ENCODE measurements at regions of chr2 and their contacts with region 1.

Region 1: DNA sequence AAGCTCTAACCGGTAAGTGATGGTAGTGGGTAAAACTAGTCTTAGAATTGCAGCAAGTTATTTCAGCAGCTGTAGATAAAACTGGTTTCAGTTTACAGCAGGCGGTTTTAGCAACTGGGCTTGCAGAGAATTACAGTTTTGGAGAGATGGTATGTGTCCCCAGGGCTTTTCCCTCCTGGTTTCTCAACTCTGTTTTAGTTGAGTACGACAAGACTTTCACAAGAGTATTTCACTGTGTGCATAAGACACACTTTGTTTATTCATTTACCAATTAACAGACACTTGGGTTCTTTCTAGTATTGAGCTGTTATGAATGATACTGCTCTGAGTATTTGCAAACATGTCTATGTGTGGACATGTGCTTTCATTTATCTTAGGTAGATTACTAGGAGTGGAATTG is 65.6 kb upstream of the RFX8 start:
- DNase-seq: no peak
- H3K4me3 ChIP-seq: peak overlapping the region in 2 of 59 donors; percentile 5 to 14
- H3K27ac ChIP-seq: peak overlapping the region in 8 of 59 donors; percentile 4 to 36 (median 18)
- H3K27me3 ChIP-seq: no peaks in the 10 kb centered on the region
- CTCF ChIP-seq: no peak

Region 2: GRCh38 chr2:101057051-101057933 is 483.2 kb before region 1 on chr2:
- intact Hi-C with region 1: no loop called
- DNase-seq: no peak
- H3K4me3 ChIP-seq: no peak overlapping the region
- H3K27ac ChIP-seq: no peak overlapping the region
- H3K27me3 ChIP-seq: no peaks in the 10 kb centered on the region
- CTCF ChIP-seq: no peak

Region 3: GRCh38 chr2:101619191-101619591 is 78.7 kb after region 1 on chr2:
- intact Hi-C with region 1: loop called in 1 of 2 experiments (anchors 2 kb)
- DNase-seq: no peak
- H3K4me3 ChIP-seq: no peak overlapping the region
- H3K27ac ChIP-seq: no peak overlapping the region
- H3K27me3 ChIP-seq: no peaks in the 10 kb centered on the region
- CTCF ChIP-seq: no peak